ENCODE measurements at regions of chr17 and their contacts with region 1.

Region 1: GRCh38 chr17:4733073-4733531 is 1.9 kb downstream of the MED11 start:
- DNase-seq: peak; percentile 85 to 95 (median 95)
- H3K4me3 ChIP-seq: peak overlapping the region in 2 of 7 experiments; percentile 55 to 57
- H3K27ac ChIP-seq: no peak overlapping the region
- H3K4me1 ChIP-seq: peaks cover 8 to 39% (median 28%) of the 10 kb centered on the region in 4 experiments
- H3K27me3 ChIP-seq: peaks cover 0 to 18% (median 2%) of the 10 kb centered on the region in 5 experiments

Region 2: DNA sequence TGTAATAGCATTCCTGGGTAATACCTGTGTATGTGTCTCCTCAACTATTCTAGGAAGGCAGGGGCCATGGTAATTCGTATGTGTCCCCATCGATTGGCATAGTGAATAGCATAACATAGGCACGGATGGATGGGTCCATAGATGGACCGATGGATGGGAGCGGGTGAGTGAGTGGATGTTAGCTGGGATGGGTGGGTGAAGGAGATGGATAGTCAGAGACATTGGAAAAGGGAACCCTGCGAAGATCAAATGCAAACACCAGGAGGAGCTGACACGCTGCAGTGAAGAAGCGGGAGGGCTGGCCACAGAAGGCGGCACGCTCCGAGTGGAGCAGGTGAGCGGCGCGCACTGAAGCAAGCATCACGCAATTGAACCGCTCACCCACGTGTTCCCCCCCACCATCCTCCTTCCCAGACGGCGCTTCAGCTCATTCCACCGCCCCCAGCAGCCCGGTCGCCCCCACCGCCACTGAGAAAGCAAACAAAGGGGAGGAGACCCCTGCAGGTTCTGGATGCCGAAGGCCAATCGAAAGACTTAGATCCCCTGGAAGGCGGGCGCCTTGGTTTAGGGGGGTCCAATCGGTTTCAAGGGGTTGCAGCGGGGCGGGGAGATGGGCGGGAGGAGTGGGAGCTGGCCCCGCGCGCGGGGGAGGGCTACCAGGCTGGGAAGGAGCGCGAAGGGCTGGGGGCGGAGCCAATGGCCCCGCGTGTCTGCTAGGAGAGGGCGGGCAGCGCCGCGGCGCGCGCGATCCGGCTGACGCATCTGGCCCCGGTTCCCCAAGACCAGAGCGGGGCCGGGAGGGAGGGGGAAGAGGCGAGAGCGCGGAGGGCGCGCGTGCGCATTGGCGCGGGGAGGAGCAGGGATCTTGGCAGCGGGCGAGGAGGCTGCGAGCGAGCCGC is 23.1 kb before region 1 on chr17 and contains the start of gene ARRB2:
- CTCF ChIA-PET with region 1: interaction called, 17 read pairs
- POLR2A ChIA-PET with region 1: interaction called, 4 read pairs
- DNase-seq: peak; percentile 99 to 100 (median 100)
- H3K4me3 ChIP-seq: peak within 1 kb of the TSS; percentile 40 to 89 (median 72)
- H3K27ac ChIP-seq: peak within 1 kb of the TSS in 1 of 2 experiments; percentile 43
- H3K4me1 ChIP-seq: peaks cover 9 to 48% (median 42%) of the 10 kb centered on the region in 4 experiments
- H3K27me3 ChIP-seq: no peaks in the 10 kb centered on the region

Region 3: GRCh38 chr17:4715063-4715744 is 17.9 kb before region 1 on chr17:
- CTCF ChIA-PET with region 1: interaction called, 17 read pairs
- POLR2A ChIA-PET with region 1: interaction called, 4 read pairs
- DNase-seq: peak; percentile 61 to 81 (median 75)
- H3K4me3 ChIP-seq: peak overlapping the region in 6 of 7 experiments; percentile 8 to 64 (median 49)
- H3K27ac ChIP-seq: peak overlapping the region in 1 of 2 experiments; percentile 23
- H3K4me1 ChIP-seq: peaks cover 9 to 68% (median 52%) of the 10 kb centered on the region in 4 experiments
- H3K27me3 ChIP-seq: no peaks in the 10 kb centered on the region

Region 4: DNA sequence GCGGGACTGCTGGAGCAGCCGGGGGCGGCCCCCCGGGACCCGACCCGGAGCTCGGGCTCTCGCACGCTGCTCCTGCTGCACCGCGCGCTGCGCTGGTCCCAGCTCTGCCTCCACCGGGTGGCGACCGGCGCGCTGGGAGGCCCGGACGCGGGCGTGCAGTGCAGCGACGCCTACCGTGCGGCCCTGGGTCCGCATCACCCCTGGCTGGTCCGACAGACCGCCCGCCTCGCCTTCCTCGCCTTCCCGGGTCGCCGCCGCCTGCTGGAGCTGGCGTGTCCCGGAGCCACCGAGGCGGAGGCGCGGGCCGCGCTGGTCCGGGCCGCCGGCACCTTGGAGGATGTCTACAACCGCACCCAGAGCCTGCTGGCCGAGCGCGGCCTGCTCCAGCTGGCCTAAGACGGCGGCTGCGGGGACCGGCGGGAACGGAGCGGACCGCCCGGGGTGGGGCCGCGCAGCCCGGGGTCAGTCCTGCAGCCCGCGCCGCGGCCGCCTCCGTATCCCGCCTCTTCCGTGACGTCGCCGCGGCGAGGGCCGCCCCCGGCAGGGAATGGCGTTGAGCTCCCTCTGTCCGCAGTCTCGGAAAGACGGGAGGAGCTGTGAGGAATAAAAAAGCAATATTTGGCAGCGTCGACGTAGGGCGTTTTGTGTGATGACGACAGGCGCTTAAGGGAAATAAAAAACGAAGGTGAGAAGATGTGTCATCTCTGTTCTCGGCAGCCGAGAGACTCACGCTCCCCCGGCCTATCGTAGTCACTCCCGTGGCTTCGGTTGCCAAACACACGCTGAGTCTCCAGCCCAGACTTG is 57.0 kb after region 1 on chr17:
- CTCF ChIA-PET with region 1: interaction called, 12 read pairs
- POLR2A ChIA-PET with region 1: no interaction called
- DNase-seq: peak; percentile 80 to 83 (median 81)
- H3K4me3 ChIP-seq: peak overlapping the region; percentile 33 to 80 (median 63)
- H3K27ac ChIP-seq: peak overlapping the region in 1 of 2 experiments; percentile 38
- H3K4me1 ChIP-seq: peaks cover 0 to 37% (median 29%) of the 10 kb centered on the region in 4 experiments
- H3K27me3 ChIP-seq: peaks cover 0 to 50% (median 28%) of the 10 kb centered on the region in 5 experiments

Region 5: GRCh38 chr17:4881761-4882555 is 148.9 kb after region 1 on chr17:
- CTCF ChIA-PET with region 1: interaction called, 21 read pairs
- POLR2A ChIA-PET with region 1: no interaction called
- DNase-seq: peak; percentile 38 to 51 (median 50)
- H3K4me3 ChIP-seq: no peak overlapping the region
- H3K27ac ChIP-seq: no peak overlapping the region
- H3K4me1 ChIP-seq: no peaks in the 10 kb centered on the region
- H3K27me3 ChIP-seq: no peaks in the 10 kb centered on the region

Measured in common myeloid progenitor, CD34-positive (primary cell).